Calu3 (cell line): ENCODE measurements at regions of chr20 and their contacts with region 1.

Region 1: GRCh38 chr20:63537525-63538203 is 488 bp upstream of the PTK6 start:
- DNase-seq: peak; percentile 100
- H3K4me3 Mint-ChIP-seq: peak overlapping the region; percentile 89
- H3K27ac Mint-ChIP-seq: peak overlapping the region; percentile 84
- H3K4me1 Mint-ChIP-seq: peaks cover 60% of the 10 kb centered on the region
- H3K27me3 Mint-ChIP-seq: no peaks in the 10 kb centered on the region
- CTCF ChIP-seq: peak; percentile 99

Region 2: GRCh38 chr20:63463400-63464288 is 74.0 kb before region 1 on chr20:
- CTCF ChIA-PET with region 1: no interaction called
- intact Hi-C with region 1: no loop called
- DNase-seq: no peak
- H3K4me3 Mint-ChIP-seq: no peak overlapping the region
- H3K27ac Mint-ChIP-seq: no peak overlapping the region
- H3K4me1 Mint-ChIP-seq: peaks cover 8% of the 10 kb centered on the region
- H3K27me3 Mint-ChIP-seq: peaks cover 100% of the 10 kb centered on the region
- CTCF ChIP-seq: no peak

Region 3: GRCh38 chr20:63574156-63574828 is 36.6 kb after region 1 on chr20 and contains the start of gene HELZ2:
- CTCF ChIA-PET with region 1: interaction called, 32 read pairs
- intact Hi-C with region 1: loop called (anchors 5 kb)
- DNase-seq: peak; percentile 85
- H3K4me3 Mint-ChIP-seq: peak within 1 kb of the TSS; percentile 88
- H3K27ac Mint-ChIP-seq: peak within 1 kb of the TSS; percentile 88
- H3K4me1 Mint-ChIP-seq: no peaks in the 10 kb centered on the region
- H3K27me3 Mint-ChIP-seq: peaks cover 37% of the 10 kb centered on the region
- CTCF ChIP-seq: no peak
- total RNA-seq, gene HELZ2: 135 and 281 TPM in 2 replicates

Region 4: GRCh38 chr20:63657937-63658748 is 120.5 kb after region 1 on chr20 and contains the start of gene RTEL1:
- CTCF ChIA-PET with region 1: interaction called, 13 read pairs
- intact Hi-C with region 1: no loop called
- DNase-seq: peak; percentile 96
- H3K4me3 Mint-ChIP-seq: peak within 1 kb of the TSS; percentile 93
- H3K27ac Mint-ChIP-seq: peak within 1 kb of the TSS; percentile 73
- H3K4me1 Mint-ChIP-seq: peaks cover 35% of the 10 kb centered on the region
- H3K27me3 Mint-ChIP-seq: peaks cover 22% of the 10 kb centered on the region
- CTCF ChIP-seq: no peak
- total RNA-seq, gene RTEL1: 39.1 and 39.8 TPM in 2 replicates

Region 5: DNA sequence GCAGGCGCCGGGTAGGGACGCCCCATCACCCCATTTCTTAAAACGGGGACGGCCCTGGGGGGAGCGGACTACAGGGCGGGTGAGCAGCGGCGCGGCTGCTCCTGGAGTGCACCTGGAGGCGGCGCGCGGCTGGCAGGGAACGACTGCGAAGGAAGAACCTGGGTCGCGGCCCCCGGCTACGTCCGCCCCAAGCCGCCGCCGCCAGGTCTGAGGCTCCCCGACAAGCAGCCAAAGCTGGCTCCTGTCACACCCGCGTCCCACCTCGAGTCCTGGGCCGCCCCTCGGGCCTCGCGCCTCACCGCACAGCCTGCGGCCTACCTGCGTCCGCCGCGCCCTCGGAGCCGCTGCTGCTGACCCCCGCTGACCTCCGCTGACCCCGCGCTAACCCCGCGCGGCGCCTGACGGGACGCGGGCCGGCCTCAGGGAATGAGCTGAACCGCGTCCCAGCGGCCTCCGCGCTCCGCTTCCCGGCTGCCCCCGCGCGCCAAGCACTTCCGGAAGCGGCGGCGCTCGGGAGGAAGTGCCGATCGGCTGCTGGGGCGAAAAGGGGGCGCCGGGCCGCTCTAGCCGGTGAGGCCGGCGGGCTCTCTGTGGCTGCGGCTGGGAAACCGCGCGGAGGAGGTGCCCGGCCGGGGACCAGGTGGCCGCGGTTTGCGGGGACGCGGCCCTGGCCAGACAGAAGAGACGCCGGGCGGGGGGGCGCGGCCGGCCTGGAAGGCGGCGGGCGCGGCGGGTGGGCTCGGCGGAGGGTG is 170.1 kb after region 1 on chr20 and contains the starts of genes ARFRP1 and ZGPAT:
- CTCF ChIA-PET with region 1: interaction called, 18 read pairs
- intact Hi-C with region 1: no loop called
- DNase-seq: peak; percentile 96
- H3K4me3 Mint-ChIP-seq: peak within 1 kb of the TSS; percentile 97
- H3K27ac Mint-ChIP-seq: peak within 1 kb of the TSS; percentile 85
- H3K4me1 Mint-ChIP-seq: peaks cover 42% of the 10 kb centered on the region
- H3K27me3 Mint-ChIP-seq: no peaks in the 10 kb centered on the region
- CTCF ChIP-seq: no peak
- total RNA-seq, gene ARFRP1: 74.0 and 85.1 TPM in 2 replicates
- total RNA-seq, gene ZGPAT: 47.0 and 48.4 TPM in 2 replicates

Region 6: GRCh38 chr20:63980806-63981728 is 443.4 kb after region 1 on chr20 and contains the start of gene PRPF6:
- CTCF ChIA-PET with region 1: interaction called, 19 read pairs
- intact Hi-C with region 1: no loop called
- DNase-seq: peak; percentile 99
- H3K4me3 Mint-ChIP-seq: peak within 1 kb of the TSS; percentile 81
- H3K27ac Mint-ChIP-seq: peak within 1 kb of the TSS; percentile 87
- H3K4me1 Mint-ChIP-seq: peaks cover 49% of the 10 kb centered on the region
- H3K27me3 Mint-ChIP-seq: no peaks in the 10 kb centered on the region
- CTCF ChIP-seq: peak; percentile 95
- total RNA-seq, gene PRPF6: 111 and 113 TPM in 2 replicates